ENCODE measurements at regions of chr1 and their contacts with region 1.

Region 1: DNA sequence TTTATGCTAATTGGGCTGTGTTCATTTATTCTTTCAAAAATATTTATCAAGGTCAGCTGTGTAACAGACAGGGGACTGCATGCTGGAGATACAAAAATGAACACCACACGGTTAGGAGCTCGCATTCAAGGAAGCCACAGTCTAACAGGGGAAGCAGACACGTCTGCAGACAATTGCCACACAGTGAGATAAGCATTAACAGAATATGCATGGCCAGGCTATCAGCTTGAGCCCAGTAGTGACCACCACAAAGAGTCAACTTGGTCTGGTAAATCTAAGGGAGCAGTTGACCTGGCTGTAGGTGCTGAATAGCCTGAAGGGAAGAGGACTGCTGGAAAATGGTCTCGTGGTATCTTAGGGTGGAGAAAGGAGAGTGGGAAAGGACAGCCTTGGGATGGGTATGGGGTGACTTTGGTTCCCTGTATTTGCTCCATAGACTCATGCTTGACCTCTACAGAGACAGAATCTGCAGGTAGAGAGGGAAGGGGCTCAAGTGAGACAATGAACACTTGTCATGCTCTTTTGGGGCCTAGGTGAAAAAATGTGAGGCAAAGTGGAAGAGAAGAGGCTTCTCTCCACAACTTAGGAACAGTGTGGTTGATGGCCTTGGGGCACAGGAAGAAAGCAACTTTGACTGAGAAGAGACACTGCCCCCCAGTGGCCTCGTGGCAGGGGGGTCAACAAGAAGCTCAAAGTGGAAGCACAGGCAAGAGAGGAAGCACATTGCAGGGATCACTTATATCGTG is 7.6 kb upstream of the NPL start:
- DNase-seq: peak; percentile 45 to 66
- H3K4me3 ChIP-seq: no peak overlapping the region
- H3K27ac ChIP-seq: no peak overlapping the region
- H3K4me1 ChIP-seq: no peaks in the 10 kb centered on the region
- H3K27me3 ChIP-seq: no peaks in the 10 kb centered on the region
- CTCF ChIP-seq: peak; percentile 83

Region 2: GRCh38 chr1:182084487-182085316 is 697.3 kb before region 1 on chr1:
- CTCF ChIA-PET with region 1: interaction called, 5 read pairs
- POLR2A ChIA-PET with region 1: no interaction called
- intact Hi-C with region 1: loop called (anchors 1 kb)
- DNase-seq: peak; percentile 59 to 82
- H3K4me3 ChIP-seq: no peak overlapping the region
- H3K27ac ChIP-seq: no peak overlapping the region
- H3K4me1 ChIP-seq: peaks cover 30% of the 10 kb centered on the region
- H3K27me3 ChIP-seq: 0 out of 2 replicates have a peak, but pooled peaks cover 3% of the 10 kb centered on the region
- CTCF ChIP-seq: peak; percentile 90

Region 3: DNA sequence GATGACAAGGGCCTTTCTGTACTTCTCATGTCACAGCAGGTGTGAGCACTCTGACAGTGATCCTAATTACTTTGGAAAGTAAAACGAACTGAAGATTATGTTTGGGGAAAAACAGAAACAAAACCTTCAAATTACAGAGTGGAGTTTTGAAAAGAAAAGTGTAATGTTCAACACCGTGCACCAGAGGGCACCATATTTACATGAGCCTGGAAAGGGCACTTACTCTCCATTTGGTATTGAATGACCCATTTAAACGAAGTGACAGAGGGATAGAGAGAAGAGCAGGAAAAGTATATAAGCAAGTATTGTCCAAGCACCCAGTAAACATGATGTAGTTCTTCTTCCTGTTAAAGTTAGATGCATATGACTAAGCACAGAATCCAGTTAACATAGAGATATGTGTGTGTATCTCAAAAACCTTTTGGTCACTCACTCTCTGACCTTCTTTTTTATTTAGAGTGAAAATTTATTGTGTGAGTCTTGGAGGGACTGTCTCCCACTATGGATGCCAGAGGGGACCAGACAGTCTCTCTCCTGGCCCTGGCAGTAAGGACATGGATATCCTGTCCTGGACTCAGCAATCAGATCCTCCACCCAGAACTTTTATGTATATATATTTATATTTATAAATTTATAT is 335.9 kb before region 1 on chr1:
- CTCF ChIA-PET with region 1: no interaction called
- POLR2A ChIA-PET with region 1: no interaction called
- intact Hi-C with region 1: loop called (anchors 1 kb)
- DNase-seq: peak; percentile 9 to 48
- H3K4me3 ChIP-seq: no peak overlapping the region
- H3K27ac ChIP-seq: no peak overlapping the region
- H3K4me1 ChIP-seq: no peaks in the 10 kb centered on the region; the same call in 1 of the 2 replicates
- H3K27me3 ChIP-seq: no peaks in the 10 kb centered on the region
- CTCF ChIP-seq: peak; percentile 89

Region 4: DNA sequence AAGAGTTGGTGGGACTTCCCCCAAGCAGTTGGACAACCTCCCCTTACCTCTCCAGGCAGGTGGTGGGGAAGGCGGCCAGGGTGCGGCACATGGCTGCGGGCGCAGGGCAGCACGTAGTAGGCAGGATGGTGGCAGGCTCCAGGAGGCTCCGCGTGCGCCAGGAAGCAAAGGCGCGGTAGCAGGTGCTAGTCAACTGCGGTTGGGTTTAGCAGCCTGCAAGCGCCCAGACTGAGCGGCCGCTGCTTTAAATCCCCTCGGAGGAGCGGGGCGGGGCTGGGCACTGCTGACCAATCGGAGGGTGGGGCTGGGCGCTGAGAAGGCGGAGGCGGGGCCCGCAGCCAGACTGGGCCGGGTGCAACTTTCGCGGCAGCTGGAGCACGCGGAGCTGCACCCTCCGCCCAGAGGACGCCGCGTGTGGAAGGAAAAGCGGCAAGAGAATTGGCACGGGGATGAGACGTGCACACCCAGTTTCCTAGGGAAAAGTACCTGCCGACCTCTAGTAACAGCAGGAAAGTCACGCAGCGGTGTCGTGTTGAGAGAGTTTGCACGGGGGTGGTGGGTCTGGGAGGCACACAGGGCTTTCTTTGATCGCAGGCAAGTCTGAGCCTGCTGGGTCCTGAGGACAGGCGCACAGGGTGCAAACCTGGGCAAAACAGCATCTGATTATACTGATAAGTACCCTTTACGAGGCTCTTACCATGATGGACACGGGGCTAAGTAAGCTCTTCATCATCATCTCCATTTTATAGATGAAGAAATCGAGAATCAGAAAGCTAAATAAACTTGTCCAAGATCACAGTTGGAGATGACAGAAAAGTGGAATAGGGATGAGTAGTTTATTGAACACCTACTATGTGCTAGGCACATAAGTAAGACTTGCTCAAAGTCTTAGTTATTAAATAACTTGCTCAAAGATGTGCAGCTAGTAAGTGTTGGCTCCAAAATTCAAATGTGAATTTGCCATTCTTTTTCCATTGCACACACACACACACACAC is 177.5 kb before region 1 on chr1 and contains the start of gene RGS16:
- CTCF ChIA-PET with region 1: interaction called, 22 read pairs
- POLR2A ChIA-PET with region 1: interaction called, 3 read pairs
- intact Hi-C with region 1: loop called (anchors 1 kb)
- DNase-seq: peak; percentile 62 to 80
- H3K4me3 ChIP-seq: peak within 1 kb of the TSS; percentile 69
- H3K27ac ChIP-seq: no peak within 1 kb of the TSS
- H3K4me1 ChIP-seq: peaks cover 15% of the 10 kb centered on the region
- H3K27me3 ChIP-seq: no peaks in the 10 kb centered on the region
- CTCF ChIP-seq: no peak
- total RNA-seq, gene RGS16: 0.25 TPM in 1 of 2 replicates, not detected in the other